GM12878 (cell line): ENCODE measurements at regions of chr1 and their contacts with region 1.

Region 1: GRCh38 chr1:39901698-39902459 is at the start of gene MYCL:
- DNase-seq: no peak
- ATAC-seq: peak; percentile 93
- H3K4me3 ChIP-seq: peak within 1 kb of the TSS; percentile 77
- H3K27ac ChIP-seq: no peak within 1 kb of the TSS
- H3K4me1 ChIP-seq: peaks cover 7% of the 10 kb centered on the region; the same call in 1 of the 2 replicates
- H3K27me3 ChIP-seq: peaks cover 10 to 12% of the 10 kb centered on the region in 2 experiments
- CTCF ChIP-seq: peak; percentile 61 to 84 (median 78)
- EP300 ChIP-seq: no peak
- POLR2A ChIP-seq: peak; percentile 63
- RAD21 ChIP-seq: peak; percentile 69
- polyA plus RNA-seq, gene MYCL: 0.11 to 0.26 TPM

Region 2: GRCh38 chr1:39683591-39684312 is 218.1 kb before region 1 on chr1:
- CTCF ChIA-PET with region 1: no interaction called
- POLR2A ChIA-PET with region 1: no interaction called
- RAD21 ChIA-PET with region 1: no interaction called
- SMC1A ChIA-PET with region 1: no interaction called
- in situ Hi-C with region 1: no loop called
- intact Hi-C with region 1: no loop called
- DNase-seq: no peak
- ATAC-seq: no peak
- H3K4me3 ChIP-seq: no peak overlapping the region
- H3K27ac ChIP-seq: no peak overlapping the region
- H3K4me1 ChIP-seq: no peaks in the 10 kb centered on the region
- H3K27me3 ChIP-seq: peaks cover 4 to 6% of the 10 kb centered on the region in 2 experiments
- CTCF ChIP-seq: no peak
- EP300 ChIP-seq: no peak
- POLR2A ChIP-seq: no peak
- RAD21 ChIP-seq: no peak

Region 3: DNA sequence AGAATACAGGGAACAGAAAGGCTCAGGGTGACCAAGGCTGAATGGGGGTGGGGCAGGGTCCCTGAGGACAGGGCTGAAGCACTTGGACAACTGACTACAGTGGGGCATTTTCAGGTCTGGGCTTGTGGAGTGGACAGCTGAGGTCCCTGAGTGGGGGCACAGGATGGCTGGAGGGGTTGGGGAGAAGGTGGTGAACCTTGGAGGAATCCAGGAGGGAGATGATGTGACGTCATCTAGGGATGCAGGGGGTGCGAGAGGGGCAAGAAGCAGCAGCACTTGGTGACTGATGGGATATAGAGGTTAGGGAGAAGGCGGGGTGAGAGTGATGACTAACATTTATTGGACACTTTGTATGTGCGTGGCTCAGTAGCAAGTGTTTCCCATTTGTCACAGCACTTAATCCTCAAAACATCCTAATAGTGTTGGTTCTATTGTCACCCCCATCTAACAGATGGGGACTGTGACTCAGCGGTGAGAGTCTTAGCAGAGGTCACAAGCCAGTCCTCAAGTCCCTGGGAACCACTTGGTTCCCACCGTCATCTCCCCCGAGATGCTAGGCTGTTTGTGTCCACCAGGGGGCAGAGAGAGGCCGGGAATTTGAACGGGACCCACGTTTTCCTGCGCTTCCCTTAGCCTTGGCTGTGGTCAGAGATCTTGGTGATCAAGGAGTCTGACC is 85.3 kb before region 1 on chr1:
- CTCF ChIA-PET with region 1: interaction called, 110 read pairs
- POLR2A ChIA-PET with region 1: interaction called, 7 read pairs
- RAD21 ChIA-PET with region 1: interaction called, 23 read pairs
- SMC1A ChIA-PET with region 1: interaction called, 42 read pairs
- in situ Hi-C with region 1: no loop called
- intact Hi-C with region 1: loop called (anchors 1 kb)
- DNase-seq: peak; percentile 55
- ATAC-seq: peak; percentile 79
- H3K4me3 ChIP-seq: no peak overlapping the region
- H3K27ac ChIP-seq: peak overlapping the region; percentile 42; the same call in 1 of the 2 replicates
- H3K4me1 ChIP-seq: peaks cover 17% of the 10 kb centered on the region
- H3K27me3 ChIP-seq: no peaks in the 10 kb centered on the region
- CTCF ChIP-seq: peak; percentile 79 to 88 (median 80)
- EP300 ChIP-seq: 0 out of 4 replicates have a peak, but pooled peaks of 1 of the 2 experiments have one; percentile 32
- POLR2A ChIP-seq: no peak
- RAD21 ChIP-seq: peak; percentile 87

Region 4: GRCh38 chr1:39835935-39836594 is 65.8 kb before region 1 on chr1:
- CTCF ChIA-PET with region 1: interaction called, 10 read pairs
- POLR2A ChIA-PET with region 1: no interaction called
- RAD21 ChIA-PET with region 1: interaction called, 5 read pairs
- SMC1A ChIA-PET with region 1: interaction called, 3 read pairs
- in situ Hi-C with region 1: no loop called
- intact Hi-C with region 1: no loop called
- DNase-seq: no peak
- ATAC-seq: no peak
- H3K4me3 ChIP-seq: no peak overlapping the region
- H3K27ac ChIP-seq: no peak overlapping the region
- H3K4me1 ChIP-seq: no peaks in the 10 kb centered on the region
- H3K27me3 ChIP-seq: no peaks in the 10 kb centered on the region
- CTCF ChIP-seq: no peak
- EP300 ChIP-seq: no peak
- POLR2A ChIP-seq: no peak
- RAD21 ChIP-seq: no peak

Region 5: GRCh38 chr1:39876144-39876543 is 25.7 kb before region 1 on chr1:
- CTCF ChIA-PET with region 1: interaction called, 12 read pairs
- POLR2A ChIA-PET with region 1: interaction called, 10 read pairs
- RAD21 ChIA-PET with region 1: interaction called, 9 read pairs
- SMC1A ChIA-PET with region 1: interaction called, 11 read pairs
- in situ Hi-C with region 1: no loop called
- intact Hi-C with region 1: no loop called
- DNase-seq: no peak
- ATAC-seq: peak; percentile 53
- H3K4me3 ChIP-seq: peak overlapping the region; percentile 1; the same call in 1 of the 2 replicates
- H3K27ac ChIP-seq: peak overlapping the region; percentile 36
- H3K4me1 ChIP-seq: peaks cover 22% of the 10 kb centered on the region
- H3K27me3 ChIP-seq: no peaks in the 10 kb centered on the region
- CTCF ChIP-seq: no peak
- EP300 ChIP-seq: no peak
- POLR2A ChIP-seq: no peak
- RAD21 ChIP-seq: no peak

Region 6: GRCh38 chr1:39954816-39955546 is 53.1 kb after region 1 on chr1 and contains the start of gene MFSD2A:
- CTCF ChIA-PET with region 1: interaction called, 11 read pairs
- POLR2A ChIA-PET with region 1: interaction called, 4 read pairs
- RAD21 ChIA-PET with region 1: interaction called, 3 read pairs
- SMC1A ChIA-PET with region 1: interaction called, 3 read pairs
- in situ Hi-C with region 1: no loop called
- intact Hi-C with region 1: no loop called
- DNase-seq: peak; percentile 55
- ATAC-seq: peak; percentile 93
- H3K4me3 ChIP-seq: peak within 1 kb of the TSS; percentile 89
- H3K27ac ChIP-seq: peak within 1 kb of the TSS; percentile 74
- H3K4me1 ChIP-seq: peaks cover 14% of the 10 kb centered on the region
- H3K27me3 ChIP-seq: no peaks in the 10 kb centered on the region
- CTCF ChIP-seq: no peak
- EP300 ChIP-seq: no peak
- POLR2A ChIP-seq: peak; percentile 96
- RAD21 ChIP-seq: no peak
- polyA plus RNA-seq, gene MFSD2A: 0.84 to 1.9 TPM